CD4-positive, alpha-beta memory T cell (primary cell): ENCODE measurements at regions of chr16 and their contacts with region 1.

Region 1: GRCh38 chr16:84186685-84187437 is at the start of gene TAF1C:
- DNase-seq: peak; percentile 83 to 88 (median 86)
- H3K4me3 ChIP-seq: peak within 1 kb of the TSS; percentile 90 to 98
- H3K4me3 Mint-ChIP-seq: peak within 1 kb of the TSS; percentile 91 to 95 (median 93)
- H3K27ac ChIP-seq: peak within 1 kb of the TSS; percentile 71
- H3K27ac Mint-ChIP-seq: peak within 1 kb of the TSS; percentile 77 to 97 (median 94)
- H3K4me1 ChIP-seq: peaks cover 19% of the 10 kb centered on the region
- H3K4me1 Mint-ChIP-seq: peaks cover 10 to 32% (median 21%) of the 10 kb centered on the region in 4 donors
- H3K27me3 ChIP-seq: no peaks in the 10 kb centered on the region
- H3K27me3 Mint-ChIP-seq: no peaks in the 10 kb centered on the region
- total RNA-seq, gene TAF1C: 91.5 to 102 TPM

Region 2: DNA sequence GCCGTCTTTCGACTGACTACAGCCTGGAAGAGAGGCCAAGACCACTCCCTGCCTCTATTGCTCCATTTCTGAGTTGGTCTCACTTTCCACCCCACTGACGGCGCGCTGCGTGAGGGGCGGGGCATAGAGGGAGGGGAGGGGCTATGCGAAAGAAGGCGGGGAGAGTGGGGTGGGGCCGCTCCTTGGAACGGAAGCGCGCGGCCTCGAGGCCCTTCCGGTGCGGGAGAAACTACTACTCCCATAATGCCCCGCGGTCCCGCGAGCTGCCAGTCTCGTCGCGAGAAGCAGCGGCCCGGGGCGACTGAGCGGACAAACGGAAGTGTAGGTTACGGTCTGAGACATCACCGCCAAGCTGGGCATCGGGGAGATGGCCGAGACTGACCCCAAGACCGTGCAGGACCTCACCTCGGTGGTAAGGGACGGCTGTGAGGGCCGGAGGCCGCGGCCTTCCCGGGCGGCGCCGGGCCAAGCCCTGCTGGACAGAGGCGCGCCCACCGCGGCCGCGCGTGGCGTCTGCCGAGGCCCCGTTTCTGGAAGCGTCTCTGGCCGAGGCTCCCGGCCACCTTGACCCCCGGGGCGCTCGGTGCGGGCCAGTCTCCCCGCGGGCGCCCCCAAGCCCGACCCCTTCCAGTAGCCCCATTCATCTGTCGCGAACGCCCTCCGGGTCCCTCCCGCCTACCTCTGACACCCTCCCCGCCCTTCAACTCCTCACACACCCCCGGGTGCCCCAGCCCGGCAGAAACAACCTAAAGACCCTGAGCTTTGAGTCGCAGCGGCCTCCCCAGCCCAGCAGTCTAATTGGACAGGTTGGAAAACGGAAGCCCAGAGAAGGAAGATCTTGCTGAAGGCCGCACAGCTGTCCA is 378.9 kb before region 1 on chr16 and contains the start of gene HSBP1:
- CTCF ChIA-PET with region 1: interaction called, 4 read pairs
- POLR2A ChIA-PET with region 1: interaction called, 4 read pairs
- intact Hi-C with region 1: loop called (anchors 2 kb)
- DNase-seq: peak; percentile 91 to 92 (median 91)
- H3K4me3 ChIP-seq: peak within 1 kb of the TSS; percentile 76 to 89
- H3K4me3 Mint-ChIP-seq: peak within 1 kb of the TSS; percentile 97 to 99 (median 98)
- H3K27ac ChIP-seq: peak within 1 kb of the TSS; percentile 74
- H3K27ac Mint-ChIP-seq: peak within 1 kb of the TSS; percentile 86 to 98 (median 97)
- H3K4me1 ChIP-seq: peaks cover 35% of the 10 kb centered on the region
- H3K4me1 Mint-ChIP-seq: peaks cover 20 to 57% (median 33%) of the 10 kb centered on the region in 4 donors
- H3K27me3 ChIP-seq: no peaks in the 10 kb centered on the region
- H3K27me3 Mint-ChIP-seq: no peaks in the 10 kb centered on the region
- total RNA-seq, gene HSBP1: 30.7 to 34.3 TPM

Region 3: DNA sequence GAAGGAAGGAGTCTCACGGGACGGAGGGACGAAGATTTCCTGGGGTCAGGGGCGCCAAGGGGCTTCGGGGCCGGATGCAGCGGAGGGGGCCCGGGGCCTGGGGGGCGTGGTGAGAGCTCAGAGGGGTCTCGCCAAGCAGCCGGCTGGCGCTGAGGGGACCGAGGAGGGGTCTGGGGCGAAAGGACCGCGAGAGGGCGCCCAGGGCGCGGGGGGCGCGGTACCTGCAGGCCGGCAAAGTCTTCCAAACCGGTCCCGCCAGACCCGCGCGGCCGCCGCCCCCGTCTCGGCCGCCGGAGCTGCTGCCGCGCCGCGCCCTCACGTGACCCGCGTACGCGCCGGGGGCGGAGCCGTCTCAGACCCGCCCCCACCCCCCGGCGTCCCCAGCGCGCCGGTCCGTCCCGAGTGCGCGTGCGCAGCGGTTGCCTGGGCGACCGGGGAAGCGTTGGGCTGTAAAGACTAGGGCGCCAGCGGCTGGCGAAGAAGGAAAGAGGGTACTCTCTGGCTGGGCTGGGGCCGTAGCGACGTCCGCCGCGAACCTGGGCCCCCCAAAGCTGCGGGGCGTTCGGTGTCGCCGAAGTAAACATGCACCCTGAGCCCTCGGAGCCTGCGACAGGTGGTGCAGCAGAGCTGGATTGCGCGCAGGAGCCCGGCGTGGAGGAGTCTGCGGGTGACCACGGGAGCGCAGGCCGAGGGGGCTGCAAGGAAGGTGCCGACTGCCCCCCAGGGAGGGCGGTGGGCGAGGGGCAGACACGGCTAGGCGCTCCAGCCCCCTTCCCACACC is 41.8 kb before region 1 on chr16 and contains the starts of genes DNAAF1 and HSDL1:
- CTCF ChIA-PET with region 1: interaction called, 5 read pairs
- POLR2A ChIA-PET with region 1: interaction called, 5 read pairs
- intact Hi-C with region 1: loop called (anchors 1 kb)
- DNase-seq: peak; percentile 89 to 95 (median 93)
- H3K4me3 ChIP-seq: peak within 1 kb of the TSS; percentile 61 to 78
- H3K4me3 Mint-ChIP-seq: peak within 1 kb of the TSS; percentile 92 to 98 (median 94)
- H3K27ac ChIP-seq: peak within 1 kb of the TSS; percentile 65
- H3K27ac Mint-ChIP-seq: peak within 1 kb of the TSS; percentile 49 to 95 (median 91)
- H3K4me1 ChIP-seq: peaks cover 13% of the 10 kb centered on the region
- H3K4me1 Mint-ChIP-seq: peaks cover 4 to 19% (median 12%) of the 10 kb centered on the region in 4 donors
- H3K27me3 ChIP-seq: no peaks in the 10 kb centered on the region
- H3K27me3 Mint-ChIP-seq: peaks cover 3 to 6% of the 10 kb centered on the region in 2 donors
- total RNA-seq, gene DNAAF1: 0.19 TPM in 1 of 2 experiments, not detected in the other
- total RNA-seq, gene HSDL1: 20.1 to 23.0 TPM

Region 4: DNA sequence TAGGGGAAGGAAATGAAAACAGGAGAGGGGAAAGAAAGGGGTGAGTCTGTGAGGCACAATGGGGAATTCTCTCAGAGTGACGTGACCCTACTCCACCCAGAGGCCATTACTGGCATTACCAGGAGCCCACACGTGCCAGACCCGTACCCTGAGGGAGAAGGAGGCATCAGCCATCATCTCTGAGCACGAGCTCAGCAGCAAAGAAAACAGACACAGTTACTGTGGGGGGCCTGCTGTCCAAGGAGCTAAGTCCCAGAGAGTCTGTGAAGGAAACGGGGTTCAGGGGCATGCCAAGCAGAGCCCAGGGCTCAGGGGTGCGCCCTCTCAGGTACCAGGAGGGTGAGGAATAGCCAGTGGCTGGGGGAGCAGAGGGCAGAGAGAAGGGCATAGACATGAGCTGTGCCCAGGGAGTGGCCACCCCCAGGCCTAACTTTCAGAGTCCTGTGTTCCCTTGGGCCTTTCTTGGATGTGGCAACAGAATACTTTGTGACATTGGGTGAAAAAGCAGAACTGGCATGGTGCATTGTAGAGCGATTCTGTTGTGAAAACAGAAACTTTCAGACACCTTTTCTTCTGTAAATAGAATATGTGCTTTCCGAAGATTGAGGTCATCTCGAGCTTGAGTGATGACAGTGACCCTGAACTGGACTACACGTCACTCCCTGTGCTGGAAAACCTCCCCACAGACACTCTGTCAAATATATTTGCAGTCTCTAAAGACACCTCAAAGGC is 11.3 kb before region 1 on chr16:
- CTCF ChIA-PET with region 1: interaction called, 12 read pairs
- POLR2A ChIA-PET with region 1: no interaction called
- intact Hi-C with region 1: no loop called
- DNase-seq: peak; percentile 35 to 59 (median 45)
- H3K4me3 ChIP-seq: no peak overlapping the region
- H3K4me3 Mint-ChIP-seq: no peak overlapping the region
- H3K27ac ChIP-seq: no peak overlapping the region
- H3K27ac Mint-ChIP-seq: peak overlapping the region in 2 of 7 donors; percentile 9 to 59
- H3K4me1 ChIP-seq: no peaks in the 10 kb centered on the region
- H3K4me1 Mint-ChIP-seq: peaks cover 0 to 6% (median 5%) of the 10 kb centered on the region in 4 donors
- H3K27me3 ChIP-seq: no peaks in the 10 kb centered on the region
- H3K27me3 Mint-ChIP-seq: peaks cover 0 to 2% of the 10 kb centered on the region in 2 donors

Region 5: DNA sequence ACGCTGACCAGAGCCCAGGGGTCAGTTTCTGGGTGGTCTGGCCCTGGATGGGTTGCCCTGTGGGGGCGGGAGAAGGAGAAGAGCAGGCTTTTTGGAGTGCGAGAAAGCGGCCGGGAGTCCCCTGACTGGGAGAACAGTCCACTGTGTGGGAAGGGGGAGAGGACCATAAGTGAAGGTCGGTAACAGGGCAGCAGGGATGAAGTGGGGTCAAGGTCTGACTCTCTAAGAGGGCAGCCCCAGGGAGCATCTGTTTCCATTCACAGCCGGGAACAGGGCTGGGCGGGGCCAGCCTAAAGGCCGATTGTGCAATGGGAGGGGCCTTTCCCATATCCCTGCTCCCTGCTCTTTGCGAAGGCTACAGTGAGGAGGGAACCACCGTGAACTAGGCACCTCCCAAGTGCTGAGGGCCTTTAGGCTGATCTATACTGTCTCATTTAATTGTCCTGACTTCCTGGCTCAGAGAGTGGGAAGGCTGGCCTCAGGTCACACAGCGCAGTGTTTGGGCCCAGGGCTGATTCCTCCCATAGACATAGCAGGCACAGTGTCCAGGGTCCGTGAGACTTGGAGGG is 97.4 kb after region 1 on chr16:
- CTCF ChIA-PET with region 1: no interaction called
- POLR2A ChIA-PET with region 1: no interaction called
- intact Hi-C with region 1: no loop called
- DNase-seq: no peak
- H3K4me3 ChIP-seq: no peak overlapping the region
- H3K4me3 Mint-ChIP-seq: no peak overlapping the region
- H3K27ac ChIP-seq: no peak overlapping the region
- H3K27ac Mint-ChIP-seq: no peak overlapping the region
- H3K4me1 ChIP-seq: no peaks in the 10 kb centered on the region
- H3K4me1 Mint-ChIP-seq: peaks cover 0 to 1% (median 0%) of the 10 kb centered on the region in 4 donors
- H3K27me3 ChIP-seq: no peaks in the 10 kb centered on the region
- H3K27me3 Mint-ChIP-seq: peaks cover 18 to 31% of the 10 kb centered on the region in 2 donors

Region 6: DNA sequence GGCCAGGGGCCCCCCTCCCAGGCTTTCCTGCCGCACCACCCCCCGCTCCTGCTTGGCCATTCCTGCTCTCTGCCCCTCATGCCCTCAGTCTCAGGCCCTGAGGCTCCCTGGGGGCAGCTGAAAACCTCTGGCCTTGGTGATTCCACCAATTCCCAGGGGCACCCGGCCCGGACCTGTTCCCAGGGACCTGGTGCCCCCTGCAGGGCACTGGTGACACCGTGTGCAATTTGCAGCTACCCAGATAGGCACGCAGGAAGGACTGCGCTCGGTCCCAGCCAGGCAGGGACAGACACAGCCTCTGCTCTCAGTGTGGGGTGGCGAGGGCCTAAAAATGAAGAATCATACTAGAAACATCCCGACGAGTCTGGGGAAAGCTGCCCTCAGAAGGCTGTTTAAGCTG is 121.3 kb after region 1 on chr16:
- CTCF ChIA-PET with region 1: no interaction called
- POLR2A ChIA-PET with region 1: no interaction called
- intact Hi-C with region 1: no loop called
- DNase-seq: no peak
- H3K4me3 ChIP-seq: no peak overlapping the region
- H3K4me3 Mint-ChIP-seq: no peak overlapping the region
- H3K27ac ChIP-seq: no peak overlapping the region
- H3K27ac Mint-ChIP-seq: no peak overlapping the region
- H3K4me1 ChIP-seq: no peaks in the 10 kb centered on the region
- H3K4me1 Mint-ChIP-seq: peaks cover 0 to 2% (median 0%) of the 10 kb centered on the region in 4 donors
- H3K27me3 ChIP-seq: peaks cover 11% of the 10 kb centered on the region
- H3K27me3 Mint-ChIP-seq: peaks cover 20 to 29% of the 10 kb centered on the region in 2 donors

Region 7: GRCh38 chr16:84414789-84415326 is 228.0 kb after region 1 on chr16:
- CTCF ChIA-PET with region 1: no interaction called
- POLR2A ChIA-PET with region 1: no interaction called
- intact Hi-C with region 1: no loop called
- DNase-seq: no peak
- H3K4me3 ChIP-seq: no peak overlapping the region
- H3K4me3 Mint-ChIP-seq: no peak overlapping the region
- H3K27ac ChIP-seq: no peak overlapping the region
- H3K27ac Mint-ChIP-seq: no peak overlapping the region
- H3K4me1 ChIP-seq: no peaks in the 10 kb centered on the region
- H3K4me1 Mint-ChIP-seq: no peaks in the 10 kb centered on the region
- H3K27me3 ChIP-seq: no peaks in the 10 kb centered on the region
- H3K27me3 Mint-ChIP-seq: peaks cover 3 to 4% of the 10 kb centered on the region in 2 donors